Posterior vena cava (tissue), 2 donors: ENCODE measurements at regions of chr5 and their contacts with region 1.

Region 1: DNA sequence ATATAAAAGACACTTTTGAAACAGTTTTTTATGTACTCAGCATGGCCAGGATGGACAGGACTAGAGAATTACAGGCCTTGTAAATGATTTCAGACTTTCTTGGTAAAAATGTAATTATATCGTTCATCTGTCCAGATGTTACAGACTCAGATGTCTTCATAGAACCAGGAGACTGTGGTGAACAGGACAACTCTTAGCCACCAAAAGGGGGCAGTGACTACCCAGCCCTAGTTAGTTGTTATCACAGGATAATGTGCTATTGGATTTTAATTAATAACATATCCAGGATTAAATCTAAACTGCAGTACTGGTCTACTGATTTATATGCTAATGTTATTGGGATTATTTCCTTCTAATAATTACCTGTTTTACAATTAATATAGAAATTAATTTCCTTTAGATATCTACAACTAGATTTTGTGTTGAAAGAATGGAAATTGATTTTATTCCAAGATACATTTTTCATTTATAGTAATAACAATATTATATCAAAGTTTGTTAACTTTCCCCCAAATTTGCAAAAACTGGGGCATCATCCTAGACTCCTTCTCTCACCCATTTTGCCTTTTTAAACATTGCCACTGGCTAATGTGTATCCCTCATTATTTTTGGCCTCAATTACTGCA is 99.4 kb downstream of the MTREX start:
- DNase-seq: no peak

Region 2: GRCh38 chr5:55485073-55485472 is 77.9 kb after region 1 on chr5:
- intact Hi-C with region 1: no loop called
- DNase-seq: no peak

Region 3: DNA sequence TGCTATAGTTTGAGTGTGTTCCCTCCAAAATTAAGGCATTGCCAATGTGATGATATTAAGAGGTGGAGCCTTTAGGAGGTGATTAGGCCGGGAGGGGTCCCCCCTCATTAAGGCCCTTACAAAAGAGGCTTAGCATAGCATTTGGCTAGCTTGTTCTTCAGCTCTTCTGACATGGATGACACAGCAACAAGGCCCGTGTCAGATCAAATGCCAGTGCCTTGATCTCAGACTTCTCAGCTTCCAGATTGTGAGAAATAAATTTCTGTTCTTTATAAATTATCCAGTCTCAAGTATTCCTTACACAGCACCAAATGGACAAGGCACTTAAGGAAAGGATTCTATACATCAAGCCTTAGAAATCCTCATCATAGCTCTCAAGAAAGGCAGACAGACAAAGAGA is 273.2 kb after region 1 on chr5:
- intact Hi-C with region 1: loop called in 1 of 2 experiments (anchors 1 kb)
- DNase-seq: no peak

Region 4: DNA sequence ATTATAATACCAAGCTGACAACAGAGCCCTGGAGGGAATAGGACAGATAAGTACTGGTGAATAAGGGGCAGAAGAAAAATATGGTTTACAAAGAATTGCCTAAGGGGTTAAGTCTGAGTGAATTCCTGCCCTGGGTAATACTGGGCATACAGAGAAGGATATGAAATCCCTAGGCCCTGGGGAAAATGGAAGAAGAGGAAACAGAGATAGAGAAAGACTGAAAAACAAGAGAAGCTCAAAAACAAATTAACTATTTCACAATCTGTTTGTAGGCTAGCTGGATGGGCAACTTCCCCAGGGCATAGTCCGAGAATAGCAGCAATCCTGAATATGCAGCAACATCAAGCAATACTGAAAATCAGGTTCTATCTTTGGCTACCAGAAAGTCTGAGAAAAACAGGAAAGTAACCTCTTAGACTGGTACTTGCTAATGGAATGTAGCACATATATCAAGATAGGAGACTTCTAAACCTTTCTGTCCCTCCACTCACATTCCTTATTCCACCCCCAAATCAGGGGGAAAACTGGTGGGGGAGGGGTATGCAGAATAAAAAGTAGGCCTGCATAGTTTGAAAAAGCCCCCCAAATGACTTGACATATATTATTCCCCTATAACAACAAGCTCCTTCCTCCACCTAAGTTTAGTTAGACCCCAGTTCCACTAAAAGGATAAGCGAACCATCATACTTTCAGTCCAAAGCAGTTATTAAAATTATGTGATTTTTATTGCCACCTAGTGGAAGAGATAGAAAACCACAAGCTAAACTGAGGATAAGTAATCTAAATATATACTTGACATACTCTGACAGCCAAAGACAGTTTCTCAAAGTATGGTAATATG is 284.3 kb after region 1 on chr5:
- intact Hi-C with region 1: loop called in 1 of 2 experiments (anchors 5 kb)
- DNase-seq: no peak

Region 5: GRCh38 chr5:56774957-56775356 is 1367.8 kb after region 1 on chr5:
- intact Hi-C with region 1: no loop called
- DNase-seq: no peak